ENCODE measurements at regions of chr1 and their contacts with region 1.

Region 1: DNA sequence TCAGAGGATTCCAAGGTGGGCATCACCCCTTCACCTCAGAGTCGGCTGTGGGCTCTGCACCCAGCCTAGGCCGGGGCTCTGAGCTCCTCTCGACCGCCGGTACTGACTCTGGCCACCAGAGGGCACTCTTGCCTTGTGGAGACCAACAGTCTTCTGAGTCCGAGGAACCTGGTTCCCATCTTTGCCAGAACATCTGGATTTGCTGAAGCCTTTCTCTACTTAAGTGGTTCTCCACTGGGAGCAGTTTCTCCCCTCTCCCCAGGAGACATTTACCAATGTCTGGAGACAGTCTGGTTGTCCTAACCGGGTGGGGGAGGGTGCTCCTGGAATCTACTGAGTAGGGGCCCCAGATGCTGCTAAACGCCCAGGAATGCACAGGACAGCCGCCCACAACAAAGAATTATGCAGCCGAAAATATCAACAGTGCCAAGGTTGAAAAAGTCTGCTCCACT is 9.4 kb downstream of the ETV3L start:
- DNase-seq: peak; percentile 76 to 97 (median 90)

Region 2: DNA sequence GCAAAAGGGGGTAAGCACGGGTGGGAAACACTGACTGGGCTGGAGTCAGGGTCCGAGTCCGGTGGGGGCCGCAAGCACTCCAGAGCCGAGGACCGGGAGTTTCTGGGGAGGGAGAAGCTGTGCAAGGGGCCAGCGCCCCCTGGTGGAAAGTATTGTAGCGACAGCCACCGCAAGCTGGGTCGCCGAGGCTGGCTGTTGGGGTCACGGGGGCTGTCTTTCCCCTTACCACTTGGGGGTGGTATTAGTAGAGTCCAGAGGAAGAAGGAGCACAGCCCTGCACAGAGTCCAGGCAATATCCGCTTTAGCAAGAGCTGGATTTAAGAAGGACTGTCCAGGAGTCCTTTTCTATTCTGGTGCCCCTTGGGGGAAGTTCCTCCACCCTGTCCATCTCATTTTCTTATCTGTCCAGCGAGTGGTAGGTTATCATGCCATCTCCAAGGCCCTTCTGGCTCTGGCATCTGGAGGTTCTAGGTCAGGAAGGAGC is 65.9 kb after region 1 on chr1:
- intact Hi-C with region 1: loop called (anchors 1 kb)
- DNase-seq: peak in 9 of 10 donors; percentile 52 to 95 (median 72)

Region 3: DNA sequence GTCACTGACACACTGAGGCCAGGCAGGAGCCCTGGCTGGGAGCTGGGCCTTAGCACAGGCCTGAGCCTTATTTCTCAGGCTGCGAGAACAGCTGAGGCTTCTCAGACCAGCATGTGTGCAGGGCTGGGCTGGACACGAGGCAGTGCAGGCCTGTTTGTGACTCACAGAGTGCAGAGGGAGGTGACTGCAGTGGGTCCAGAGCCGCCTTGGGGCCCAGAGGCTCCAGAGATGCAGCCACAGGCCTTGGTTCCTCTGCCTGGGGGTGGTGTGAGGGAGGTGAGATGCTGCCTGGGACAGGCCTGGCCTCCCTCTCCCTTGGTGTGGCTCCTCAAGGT is 109.2 kb after region 1 on chr1:
- intact Hi-C with region 1: no loop called
- DNase-seq: peak in 1 of 10 donors; percentile 35

Region 4: DNA sequence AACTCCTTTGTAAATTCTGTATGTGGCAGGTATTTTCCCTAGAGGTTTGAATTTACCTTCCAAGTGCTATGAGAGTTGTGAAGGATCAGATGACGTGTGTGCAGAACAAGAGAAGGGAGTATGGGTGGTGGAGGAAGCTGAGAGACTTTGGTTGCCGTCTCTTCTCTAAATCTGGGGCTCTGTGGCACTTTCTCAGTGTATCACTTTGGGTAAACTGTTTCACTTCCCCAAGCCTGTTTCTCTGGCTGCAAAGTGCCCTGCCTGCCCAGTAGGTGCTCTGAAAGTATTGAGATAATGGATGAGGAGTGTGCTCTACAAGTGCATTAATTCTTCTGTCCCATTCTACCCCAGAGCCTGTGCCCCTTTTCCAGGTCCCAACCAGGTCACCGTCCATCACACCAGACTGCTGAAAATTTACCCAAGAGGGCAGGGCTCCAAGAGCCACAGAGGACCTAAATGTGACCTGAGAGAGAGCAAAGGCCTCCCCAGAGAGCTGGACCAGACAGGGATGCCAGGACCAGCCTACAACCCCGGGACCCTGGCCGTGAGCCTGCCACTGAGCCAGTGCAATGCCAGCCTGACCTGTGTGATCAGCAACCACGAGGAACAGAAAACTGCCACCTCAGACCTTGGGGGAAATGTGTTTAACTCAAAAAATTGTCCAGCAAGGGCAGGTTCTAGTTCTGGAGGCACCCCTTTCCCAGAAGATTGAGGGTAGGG is 179.6 kb after region 1 on chr1:
- intact Hi-C with region 1: no loop called
- DNase-seq: no peak

Region 5: DNA sequence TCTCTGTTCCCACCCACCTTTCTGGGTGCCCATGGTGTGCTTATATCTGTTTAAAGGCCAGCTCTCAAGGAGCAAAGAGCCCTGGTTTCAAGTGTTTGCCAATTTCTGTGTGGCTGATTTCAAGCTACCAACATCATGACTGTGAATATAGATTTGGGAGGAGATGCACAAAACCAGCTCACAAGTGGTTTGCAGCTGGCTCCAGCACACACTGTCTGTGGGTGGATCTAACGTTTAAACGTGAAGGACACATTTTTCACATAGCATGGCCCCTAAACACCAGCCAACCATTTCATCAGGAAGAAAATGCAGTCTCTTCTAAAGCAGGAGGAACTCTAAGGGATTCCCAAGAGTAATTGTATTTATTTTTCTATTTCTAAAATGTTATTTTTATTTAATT is 396.9 kb after region 1 on chr1:
- intact Hi-C with region 1: loop called (anchors 10 kb)
- DNase-seq: no peak

Measured in posterior cingulate gyrus (tissue), 11 donors.